Ovary (tissue), 10 donors: ENCODE measurements at regions of chr7 and their contacts with region 1.

Region 1: DNA sequence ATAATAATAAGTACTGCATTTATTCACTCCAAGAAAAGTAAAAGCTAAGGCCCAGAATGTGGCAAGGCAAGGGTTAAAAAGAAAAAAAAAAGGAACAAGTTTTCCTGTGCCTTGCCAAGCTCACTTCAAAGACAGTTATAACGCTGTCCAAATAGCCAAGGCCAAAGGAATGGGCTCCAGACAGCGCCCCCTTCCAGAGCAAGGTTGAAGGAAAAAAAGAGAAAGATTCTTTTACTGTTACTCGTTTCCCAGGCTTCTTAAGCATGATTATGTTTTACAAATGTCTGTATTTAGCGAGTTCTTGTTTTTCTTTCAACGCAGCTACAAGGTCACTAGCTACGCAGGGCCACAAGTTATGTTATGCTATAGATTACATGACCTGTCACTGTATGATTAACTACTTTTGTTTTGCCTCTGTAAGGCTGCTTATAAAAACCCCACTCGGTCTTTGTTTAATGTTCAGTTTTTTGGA is 9.1 kb upstream of the EIF4H start:
- DNase-seq: peak; percentile 69 to 80 (median 71)
- H3K4me3 ChIP-seq: no peak overlapping the region
- H3K27ac ChIP-seq: peak overlapping the region in 1 of 2 donors; percentile 66
- H3K4me1 ChIP-seq: peaks cover 8% of the 10 kb centered on the region
- H3K27me3 ChIP-seq: no peaks in the 10 kb centered on the region
- CTCF ChIP-seq: peak; percentile 25 to 64 (median 32)
- EP300 ChIP-seq: no peak
- POLR2A ChIP-seq: no peak

Region 2: GRCh38 chr7:74061840-74062539 is 103.0 kb before region 1 on chr7:
- intact Hi-C with region 1: loop called in 1 of 4 experiments (anchors 10 kb)
- DNase-seq: peak; percentile 90 to 91 (median 91)
- H3K4me3 ChIP-seq: no peak overlapping the region
- H3K27ac ChIP-seq: peak overlapping the region; percentile 77 to 94
- H3K4me1 ChIP-seq: peaks cover 6% of the 10 kb centered on the region
- H3K27me3 ChIP-seq: no peaks in the 10 kb centered on the region
- CTCF ChIP-seq: no peak
- EP300 ChIP-seq: peak; percentile 12
- POLR2A ChIP-seq: no peak

Region 3: DNA sequence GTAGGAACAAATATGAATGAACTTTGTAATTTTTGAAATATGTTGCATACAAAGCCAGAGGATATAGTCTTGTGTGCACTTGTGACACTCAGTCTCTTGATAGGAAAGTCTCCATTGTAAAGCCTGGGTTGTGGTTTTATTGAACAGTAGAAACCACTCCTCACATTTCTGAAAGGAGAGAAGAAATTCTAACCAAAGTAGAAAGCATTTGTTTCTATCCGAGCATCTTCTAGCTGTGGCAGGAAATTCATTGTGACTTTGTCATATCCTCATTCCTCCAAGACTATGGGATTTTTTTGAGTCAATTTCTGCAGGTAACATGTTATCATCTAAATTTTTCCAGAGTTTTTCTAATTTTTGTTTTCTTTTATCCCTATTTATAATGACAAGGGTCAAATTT is 553.3 kb after region 1 on chr7:
- intact Hi-C with region 1: no loop called
- DNase-seq: no peak
- H3K4me3 ChIP-seq: no peak overlapping the region
- H3K27ac ChIP-seq: no peak overlapping the region
- H3K4me1 ChIP-seq: peaks cover 3% of the 10 kb centered on the region
- H3K27me3 ChIP-seq: no peaks in the 10 kb centered on the region
- CTCF ChIP-seq: no peak
- EP300 ChIP-seq: no peak
- POLR2A ChIP-seq: no peak